GM12878 (cell line): ENCODE measurements at regions of chr4 and their contacts with region 1.

Region 1: GRCh38 chr4:95165926-95166524 is 382.7 kb downstream of the UNC5C start:
- DNase-seq: peak; percentile 17
- ATAC-seq: peak; percentile 82
- H3K4me3 ChIP-seq: no peak overlapping the region
- H3K27ac ChIP-seq: no peak overlapping the region
- H3K4me1 ChIP-seq: no peaks in the 10 kb centered on the region
- H3K27me3 ChIP-seq: no peaks in the 10 kb centered on the region
- CTCF ChIP-seq: peak; percentile 44 to 79 (median 50); a peak in 5 of 6 replicates
- EP300 ChIP-seq: no peak
- POLR2A ChIP-seq: no peak
- RAD21 ChIP-seq: peak; percentile 74

Region 2: DNA sequence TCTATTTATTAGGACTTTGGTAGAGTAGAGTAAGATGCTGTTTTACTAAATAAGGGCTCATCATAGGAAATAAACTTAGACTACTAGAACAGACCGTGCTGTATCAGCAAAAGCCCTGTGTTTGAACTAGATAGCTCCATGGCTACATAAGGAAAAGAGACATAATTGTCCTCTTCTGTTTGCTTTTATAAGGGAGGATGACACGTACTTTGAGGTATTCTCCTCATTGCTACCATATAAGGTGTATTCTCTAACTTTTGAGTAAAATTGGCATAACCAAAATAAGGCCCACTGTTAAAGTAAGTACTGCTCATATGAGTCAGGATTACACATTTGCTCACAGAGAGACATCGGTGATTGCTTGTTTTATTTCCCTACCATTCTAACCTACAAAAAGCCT is 650.0 kb before region 1 on chr4:
- CTCF ChIA-PET with region 1: no interaction called
- POLR2A ChIA-PET with region 1: no interaction called
- RAD21 ChIA-PET with region 1: no interaction called
- SMC1A ChIA-PET with region 1: no interaction called
- in situ Hi-C with region 1: no loop called
- intact Hi-C with region 1: no loop called
- DNase-seq: no peak
- ATAC-seq: no peak
- H3K4me3 ChIP-seq: no peak overlapping the region
- H3K27ac ChIP-seq: no peak overlapping the region
- H3K4me1 ChIP-seq: peaks cover 17% of the 10 kb centered on the region
- H3K27me3 ChIP-seq: no peaks in the 10 kb centered on the region
- CTCF ChIP-seq: no peak
- EP300 ChIP-seq: no peak
- POLR2A ChIP-seq: no peak
- RAD21 ChIP-seq: no peak

Region 3: DNA sequence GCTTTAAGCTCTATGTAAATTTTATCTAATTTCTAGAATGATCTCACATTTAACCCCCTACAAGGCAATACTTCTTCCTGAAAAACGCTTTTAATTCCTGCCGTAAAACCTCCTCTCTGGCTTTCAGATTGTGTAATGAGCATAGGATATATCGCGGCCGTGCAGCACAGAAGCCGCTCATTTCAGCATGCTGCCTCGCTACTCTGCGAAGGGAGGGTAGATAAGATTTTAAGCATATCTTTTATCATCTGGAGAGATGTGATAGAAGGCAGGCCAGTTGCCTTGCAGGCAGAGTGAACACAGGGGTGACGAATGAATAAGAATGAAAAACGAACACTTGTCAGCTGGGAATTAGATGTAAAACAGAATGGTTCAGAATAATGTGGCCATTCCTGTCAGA is 117.3 kb after region 1 on chr4:
- CTCF ChIA-PET with region 1: no interaction called
- POLR2A ChIA-PET with region 1: no interaction called
- RAD21 ChIA-PET with region 1: no interaction called
- SMC1A ChIA-PET with region 1: no interaction called
- in situ Hi-C with region 1: no loop called
- intact Hi-C with region 1: no loop called
- DNase-seq: no peak
- ATAC-seq: no peak
- H3K4me3 ChIP-seq: no peak overlapping the region
- H3K27ac ChIP-seq: no peak overlapping the region
- H3K4me1 ChIP-seq: no peaks in the 10 kb centered on the region
- H3K27me3 ChIP-seq: no peaks in the 10 kb centered on the region
- CTCF ChIP-seq: no peak
- EP300 ChIP-seq: no peak
- POLR2A ChIP-seq: no peak
- RAD21 ChIP-seq: no peak

Region 4: GRCh38 chr4:95362906-95363558 is 197.0 kb after region 1 on chr4:
- CTCF ChIA-PET with region 1: interaction called, 4 read pairs
- POLR2A ChIA-PET with region 1: no interaction called
- RAD21 ChIA-PET with region 1: no interaction called
- SMC1A ChIA-PET with region 1: no interaction called
- in situ Hi-C with region 1: no loop called
- intact Hi-C with region 1: loop called (anchors 5 kb)
- DNase-seq: no peak
- ATAC-seq: peak; percentile 85
- H3K4me3 ChIP-seq: no peak overlapping the region
- H3K27ac ChIP-seq: no peak overlapping the region
- H3K4me1 ChIP-seq: no peaks in the 10 kb centered on the region
- H3K27me3 ChIP-seq: no peaks in the 10 kb centered on the region
- CTCF ChIP-seq: peak in 1 of 3 experiments; percentile 40; a peak in 2 of 6 replicates
- EP300 ChIP-seq: no peak
- POLR2A ChIP-seq: no peak
- RAD21 ChIP-seq: no peak

Region 5: GRCh38 chr4:95499291-95499696 is 333.3 kb after region 1 on chr4:
- CTCF ChIA-PET with region 1: no interaction called
- POLR2A ChIA-PET with region 1: no interaction called
- RAD21 ChIA-PET with region 1: no interaction called
- SMC1A ChIA-PET with region 1: no interaction called
- in situ Hi-C with region 1: no loop called
- intact Hi-C with region 1: loop called (anchors 5 kb)
- DNase-seq: no peak
- ATAC-seq: no peak
- H3K4me3 ChIP-seq: no peak overlapping the region
- H3K27ac ChIP-seq: no peak overlapping the region
- H3K4me1 ChIP-seq: no peaks in the 10 kb centered on the region
- H3K27me3 ChIP-seq: no peaks in the 10 kb centered on the region
- CTCF ChIP-seq: no peak
- EP300 ChIP-seq: no peak
- POLR2A ChIP-seq: no peak
- RAD21 ChIP-seq: no peak

Region 6: DNA sequence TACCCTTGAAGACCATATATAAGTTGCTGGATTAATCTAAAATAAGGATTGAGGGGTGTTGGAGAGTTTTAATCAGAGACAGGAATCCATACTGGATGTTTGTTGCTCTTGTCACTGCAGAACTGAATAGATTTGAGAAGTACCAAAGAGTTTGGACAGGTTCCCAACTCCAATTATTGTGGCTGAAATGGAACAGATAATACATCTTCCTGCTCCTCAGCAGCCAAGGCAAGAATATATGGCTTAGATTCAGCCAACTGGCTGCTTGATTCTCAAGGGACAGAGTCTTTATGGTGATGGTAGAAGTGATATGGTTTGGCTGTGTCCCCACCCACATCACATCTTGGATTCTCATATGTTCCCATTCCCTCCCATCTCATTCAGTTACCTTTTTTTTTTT is 576.8 kb after region 1 on chr4:
- CTCF ChIA-PET with region 1: no interaction called
- POLR2A ChIA-PET with region 1: no interaction called
- RAD21 ChIA-PET with region 1: no interaction called
- SMC1A ChIA-PET with region 1: no interaction called
- in situ Hi-C with region 1: no loop called
- intact Hi-C with region 1: loop called (anchors 10 kb)
- DNase-seq: no peak
- ATAC-seq: no peak
- H3K4me3 ChIP-seq: no peak overlapping the region
- H3K27ac ChIP-seq: no peak overlapping the region
- H3K4me1 ChIP-seq: no peaks in the 10 kb centered on the region
- H3K27me3 ChIP-seq: no peaks in the 10 kb centered on the region
- CTCF ChIP-seq: no peak
- EP300 ChIP-seq: no peak
- POLR2A ChIP-seq: no peak
- RAD21 ChIP-seq: no peak

Region 7: DNA sequence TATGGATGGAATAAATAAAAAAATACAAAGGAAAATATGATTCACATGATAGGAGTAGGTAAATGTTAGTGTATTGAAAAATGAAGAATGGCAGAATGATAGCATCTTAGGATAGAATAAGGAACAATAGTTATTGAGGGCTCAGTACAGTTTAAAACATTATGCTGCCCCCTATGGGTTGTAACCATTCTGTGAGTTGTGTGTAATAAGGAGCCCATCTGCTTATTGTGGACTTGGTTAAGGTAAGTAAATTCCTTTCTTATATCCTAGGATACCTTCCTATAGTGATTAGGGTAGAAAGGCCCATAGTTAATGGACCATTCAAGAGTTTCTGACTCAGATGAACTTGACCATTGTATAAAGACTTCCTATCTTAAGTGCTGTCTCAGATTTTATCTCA is 869.7 kb after region 1 on chr4:
- CTCF ChIA-PET with region 1: interaction called, 12 read pairs
- POLR2A ChIA-PET with region 1: no interaction called
- RAD21 ChIA-PET with region 1: no interaction called
- SMC1A ChIA-PET with region 1: no interaction called
- in situ Hi-C with region 1: loop called (anchors 25 kb)
- intact Hi-C with region 1: loop called (anchors 1 kb)
- DNase-seq: no peak
- ATAC-seq: peak; percentile 84
- H3K4me3 ChIP-seq: no peak overlapping the region
- H3K27ac ChIP-seq: no peak overlapping the region
- H3K4me1 ChIP-seq: no peaks in the 10 kb centered on the region
- H3K27me3 ChIP-seq: no peaks in the 10 kb centered on the region
- CTCF ChIP-seq: peak; percentile 22 to 52 (median 30); a peak in 3 of 6 replicates
- EP300 ChIP-seq: no peak
- POLR2A ChIP-seq: no peak
- RAD21 ChIP-seq: peak; percentile 32; the same call in 1 of the 2 replicates